ENCODE measurements at regions of chr12 and their contacts with region 1.

Region 1: DNA sequence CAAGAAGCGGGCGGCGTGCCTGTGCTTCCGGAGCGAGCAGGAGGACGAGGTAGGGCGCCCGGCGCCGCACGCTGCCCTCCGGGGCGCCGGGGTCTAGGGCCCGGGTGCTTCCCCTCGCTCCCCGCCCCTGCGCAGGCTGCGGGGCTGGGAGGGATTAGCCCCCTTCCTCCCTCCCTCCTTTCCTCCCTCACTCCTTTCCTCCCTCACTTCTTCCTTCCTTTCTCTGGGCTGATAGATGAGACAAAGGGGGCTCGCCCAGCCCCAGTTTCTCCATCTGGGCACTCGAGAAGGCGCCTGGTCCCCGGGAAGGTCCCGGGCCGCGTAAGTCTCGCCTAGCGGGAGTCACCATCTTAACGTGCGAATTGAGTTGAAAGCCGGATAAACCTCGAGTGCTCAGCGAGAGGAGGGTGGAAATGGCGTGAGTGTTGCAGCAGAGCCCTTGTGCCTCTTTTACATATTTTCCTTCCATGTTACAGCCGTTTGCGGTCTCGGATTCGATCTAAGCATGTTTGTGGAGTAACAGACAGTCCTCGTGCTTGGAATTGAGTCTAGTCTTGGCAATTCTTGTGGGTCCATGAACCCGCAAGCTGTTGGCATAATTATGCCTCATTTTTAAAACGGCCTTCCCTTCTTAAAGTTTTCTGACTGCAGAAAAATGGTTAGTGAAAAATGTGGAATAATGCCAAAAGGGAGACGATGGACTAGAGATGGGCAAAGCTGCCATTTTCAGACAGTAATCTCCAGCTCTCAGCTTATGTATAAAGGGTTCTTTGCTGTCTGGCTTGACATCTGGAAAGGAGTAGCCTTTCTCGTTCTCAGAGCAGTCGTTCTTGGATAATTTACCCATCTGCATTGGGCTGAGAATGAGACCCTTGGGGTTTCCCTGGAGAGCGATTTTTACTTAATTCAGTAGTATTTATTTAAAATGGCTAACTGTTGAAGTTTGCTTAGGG is 924 bp downstream of the NUDT4 start:
- DNase-seq: peak; percentile 58
- H3K4me3 Mint-ChIP-seq: peak overlapping the region; percentile 100
- H3K27ac Mint-ChIP-seq: peak overlapping the region; percentile 100
- H3K4me1 Mint-ChIP-seq: peaks cover 50% of the 10 kb centered on the region
- H3K27me3 Mint-ChIP-seq: peaks cover 2% of the 10 kb centered on the region

Region 2: GRCh38 chr12:92899388-92900001 is 479.2 kb before region 1 on chr12:
- intact Hi-C with region 1: no loop called
- DNase-seq: no peak
- H3K4me3 Mint-ChIP-seq: no peak overlapping the region
- H3K27ac Mint-ChIP-seq: no peak overlapping the region
- H3K4me1 Mint-ChIP-seq: peaks cover 14% of the 10 kb centered on the region
- H3K27me3 Mint-ChIP-seq: no peaks in the 10 kb centered on the region

Region 3: GRCh38 chr12:92987362-92987761 is 391.3 kb before region 1 on chr12:
- intact Hi-C with region 1: loop called (anchors 1 kb)
- DNase-seq: no peak
- H3K4me3 Mint-ChIP-seq: no peak overlapping the region
- H3K27ac Mint-ChIP-seq: peak overlapping the region; percentile 79
- H3K4me1 Mint-ChIP-seq: peaks cover 30% of the 10 kb centered on the region
- H3K27me3 Mint-ChIP-seq: no peaks in the 10 kb centered on the region

Region 4: DNA sequence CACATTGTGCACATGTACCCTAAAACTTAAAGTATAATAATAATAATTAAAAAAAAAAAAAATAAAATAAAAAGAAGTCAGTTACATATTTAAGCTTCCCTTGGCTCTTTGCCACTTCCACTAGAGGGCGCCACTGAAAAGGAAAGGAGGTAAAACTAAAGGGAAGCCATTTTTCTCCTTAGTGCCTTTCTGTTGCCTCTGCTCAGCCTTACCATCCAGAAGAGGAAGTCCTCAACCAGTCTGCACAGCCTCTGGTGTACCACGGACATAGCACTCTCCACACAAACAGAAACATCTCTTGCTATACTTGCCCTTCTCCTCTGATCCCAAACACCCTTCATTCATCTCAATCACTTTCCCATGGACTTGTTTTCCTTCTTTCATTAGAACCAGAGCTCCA is 280.6 kb before region 1 on chr12:
- intact Hi-C with region 1: loop called (anchors 1 kb)
- DNase-seq: peak; percentile 56
- H3K4me3 Mint-ChIP-seq: no peak overlapping the region
- H3K27ac Mint-ChIP-seq: no peak overlapping the region
- H3K4me1 Mint-ChIP-seq: peaks cover 6% of the 10 kb centered on the region
- H3K27me3 Mint-ChIP-seq: no peaks in the 10 kb centered on the region

Region 5: GRCh38 chr12:93243689-93244513 is 134.7 kb before region 1 on chr12:
- intact Hi-C with region 1: loop called (anchors 2 kb)
- DNase-seq: peak; percentile 4
- H3K4me3 Mint-ChIP-seq: peak overlapping the region; percentile 63
- H3K27ac Mint-ChIP-seq: peak overlapping the region; percentile 69
- H3K4me1 Mint-ChIP-seq: peaks cover 59% of the 10 kb centered on the region
- H3K27me3 Mint-ChIP-seq: no peaks in the 10 kb centered on the region

Region 6: GRCh38 chr12:93419388-93420034 is 40.9 kb after region 1 on chr12:
- intact Hi-C with region 1: loop called (anchors 2 kb)
- DNase-seq: no peak
- H3K4me3 Mint-ChIP-seq: no peak overlapping the region
- H3K27ac Mint-ChIP-seq: peak overlapping the region; percentile 3
- H3K4me1 Mint-ChIP-seq: peaks cover 73% of the 10 kb centered on the region
- H3K27me3 Mint-ChIP-seq: no peaks in the 10 kb centered on the region

Region 7: DNA sequence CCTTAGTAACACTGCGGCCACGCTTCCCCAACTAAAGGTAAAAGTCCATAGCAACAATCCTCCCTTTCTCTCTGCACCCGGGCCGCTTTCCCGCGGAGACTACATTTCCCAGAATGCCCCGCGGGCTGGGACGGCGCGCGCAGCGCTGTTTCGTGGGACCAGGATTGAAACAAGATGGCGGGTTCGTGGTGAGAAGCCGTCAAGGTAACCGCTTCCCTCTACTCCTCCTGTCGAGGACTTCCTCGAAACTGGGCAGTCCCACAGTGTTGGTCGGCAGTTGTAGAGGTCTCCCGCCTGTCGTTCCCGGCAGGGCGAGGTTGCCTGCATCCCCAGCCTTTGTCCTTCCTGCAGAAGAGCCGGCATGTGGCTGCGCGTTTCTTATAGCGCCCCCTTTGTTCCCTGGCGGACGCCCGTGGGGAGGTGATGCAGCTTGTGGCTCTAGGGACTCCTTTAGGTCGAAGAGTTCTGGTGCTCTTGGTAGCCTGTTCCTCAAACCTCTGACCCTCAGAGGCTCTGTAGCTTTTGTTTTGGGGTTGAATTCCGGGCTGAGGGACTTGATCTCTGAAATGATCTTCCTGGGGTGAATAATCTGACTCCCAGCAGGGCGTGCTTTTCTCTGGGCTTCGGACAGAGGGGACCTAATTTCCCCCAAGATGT is 88.8 kb after region 1 on chr12 and contains the start of gene MRPL42:
- intact Hi-C with region 1: loop called (anchors 2 kb)
- DNase-seq: peak; percentile 90
- H3K4me3 Mint-ChIP-seq: peak within 1 kb of the TSS; percentile 96
- H3K27ac Mint-ChIP-seq: peak within 1 kb of the TSS; percentile 93
- H3K4me1 Mint-ChIP-seq: peaks cover 43% of the 10 kb centered on the region
- H3K27me3 Mint-ChIP-seq: no peaks in the 10 kb centered on the region
- total RNA-seq, gene MRPL42: 83.2 and 87.0 TPM in 2 replicates

Region 8: GRCh38 chr12:93751864-93752610 is 373.4 kb after region 1 on chr12:
- intact Hi-C with region 1: no loop called
- DNase-seq: no peak
- H3K4me3 Mint-ChIP-seq: no peak overlapping the region
- H3K27ac Mint-ChIP-seq: no peak overlapping the region
- H3K4me1 Mint-ChIP-seq: peaks cover 11% of the 10 kb centered on the region
- H3K27me3 Mint-ChIP-seq: no peaks in the 10 kb centered on the region

Region 9: DNA sequence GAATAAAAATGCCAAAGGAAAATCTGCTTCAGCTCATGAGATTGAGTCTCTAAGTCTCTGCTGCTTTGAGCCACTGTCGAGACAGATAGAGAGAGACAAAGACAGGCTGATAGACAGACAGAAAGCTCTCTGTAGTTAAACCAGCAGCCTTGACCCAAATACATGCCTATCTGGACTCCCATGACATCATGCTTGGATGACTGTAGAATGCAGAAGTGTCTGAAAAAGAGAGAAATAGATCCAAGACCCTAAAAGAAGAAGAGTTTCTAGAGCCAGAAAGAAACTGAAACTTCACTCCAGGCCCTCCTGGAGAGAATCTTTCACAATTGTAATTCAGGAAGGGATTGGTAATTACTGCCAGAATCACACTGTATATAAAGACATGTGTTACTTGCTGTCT is 647.1 kb after region 1 on chr12:
- intact Hi-C with region 1: no loop called
- DNase-seq: no peak
- H3K4me3 Mint-ChIP-seq: no peak overlapping the region
- H3K27ac Mint-ChIP-seq: no peak overlapping the region
- H3K4me1 Mint-ChIP-seq: peaks cover 11% of the 10 kb centered on the region
- H3K27me3 Mint-ChIP-seq: no peaks in the 10 kb centered on the region

Measured in activated T-helper 1 cell treated with anti-CD3 and anti-CD28 coated beads, Interleukin-12 subunit alpha, Interleukin-12 subunit beta, Interleukin-2, Interleukin-4 antibody, amounts not matched to agents 30 ng/mL and 10 ng/mL and 1 ng/mL, durations not matched to agents 14 hours and 24 hours and 36 hours (primary cell).